CD4-positive, alpha-beta T cell (primary cell): ENCODE measurements at regions of chr3 and their contacts with region 1.

Region 1: DNA sequence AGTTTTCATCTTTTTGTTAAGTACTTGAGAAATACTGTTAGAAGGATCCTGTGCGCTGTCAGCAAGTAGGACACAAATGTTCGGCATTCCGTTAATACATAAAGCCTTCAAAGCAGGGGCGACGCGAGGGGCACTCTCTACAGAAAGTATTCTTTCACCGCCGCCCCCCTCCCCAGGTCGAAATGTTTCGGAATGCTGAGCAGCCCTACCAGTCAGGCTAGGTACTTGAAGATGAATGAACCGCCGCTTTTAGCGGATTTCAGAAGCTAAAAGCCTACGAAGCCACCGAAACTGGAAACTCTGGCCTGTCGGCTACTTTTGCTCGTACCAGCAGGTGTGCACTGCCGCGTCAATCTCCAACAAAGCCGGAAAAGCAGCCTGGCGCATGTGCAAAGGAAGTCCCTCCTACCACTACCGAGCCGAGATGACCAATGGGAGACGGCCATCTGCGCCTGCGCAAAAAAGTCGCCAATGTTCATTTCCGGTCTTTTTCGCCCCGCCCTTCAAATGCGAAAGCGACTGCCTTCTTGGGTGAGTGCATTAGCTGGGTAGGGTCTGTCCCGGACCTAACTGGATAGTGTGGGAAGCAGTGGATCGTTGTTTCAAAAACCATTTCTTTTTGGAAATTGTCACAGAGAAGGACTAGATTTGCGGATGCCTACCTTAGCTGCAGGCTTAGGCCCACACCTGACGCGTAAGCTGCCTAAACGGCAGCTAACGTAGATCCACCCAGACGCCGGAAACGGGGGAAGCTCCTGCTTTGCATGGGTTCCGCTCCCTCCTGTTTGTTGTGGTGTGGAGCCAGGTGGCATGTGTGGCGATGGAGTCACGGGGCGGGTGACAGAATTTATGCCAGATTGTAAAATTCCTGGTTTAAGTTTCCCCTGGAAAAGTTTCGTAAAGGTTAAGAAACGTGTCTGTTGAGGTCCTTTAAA is at the start of gene WDR5B:
- DNase-seq: peak; percentile 96 to 99 (median 98)
- ATAC-seq: peak; percentile 87
- H3K4me3 ChIP-seq: peak within 1 kb of the TSS; percentile 76
- H3K4me3 Mint-ChIP-seq: peak within 1 kb of the TSS; percentile 97
- H3K27ac ChIP-seq: peak within 1 kb of the TSS; percentile 90 to 91
- H3K27ac Mint-ChIP-seq: peak within 1 kb of the TSS; percentile 100
- H3K4me1 ChIP-seq: peaks cover 22% of the 10 kb centered on the region
- H3K4me1 Mint-ChIP-seq: peaks cover 59% of the 10 kb centered on the region
- H3K27me3 ChIP-seq: no peaks in the 10 kb centered on the region
- H3K27me3 Mint-ChIP-seq: no peaks in the 10 kb centered on the region
- CTCF ChIP-seq: no peak
- total RNA-seq, gene WDR5B: 2.3 to 2.4 TPM

Region 2: DNA sequence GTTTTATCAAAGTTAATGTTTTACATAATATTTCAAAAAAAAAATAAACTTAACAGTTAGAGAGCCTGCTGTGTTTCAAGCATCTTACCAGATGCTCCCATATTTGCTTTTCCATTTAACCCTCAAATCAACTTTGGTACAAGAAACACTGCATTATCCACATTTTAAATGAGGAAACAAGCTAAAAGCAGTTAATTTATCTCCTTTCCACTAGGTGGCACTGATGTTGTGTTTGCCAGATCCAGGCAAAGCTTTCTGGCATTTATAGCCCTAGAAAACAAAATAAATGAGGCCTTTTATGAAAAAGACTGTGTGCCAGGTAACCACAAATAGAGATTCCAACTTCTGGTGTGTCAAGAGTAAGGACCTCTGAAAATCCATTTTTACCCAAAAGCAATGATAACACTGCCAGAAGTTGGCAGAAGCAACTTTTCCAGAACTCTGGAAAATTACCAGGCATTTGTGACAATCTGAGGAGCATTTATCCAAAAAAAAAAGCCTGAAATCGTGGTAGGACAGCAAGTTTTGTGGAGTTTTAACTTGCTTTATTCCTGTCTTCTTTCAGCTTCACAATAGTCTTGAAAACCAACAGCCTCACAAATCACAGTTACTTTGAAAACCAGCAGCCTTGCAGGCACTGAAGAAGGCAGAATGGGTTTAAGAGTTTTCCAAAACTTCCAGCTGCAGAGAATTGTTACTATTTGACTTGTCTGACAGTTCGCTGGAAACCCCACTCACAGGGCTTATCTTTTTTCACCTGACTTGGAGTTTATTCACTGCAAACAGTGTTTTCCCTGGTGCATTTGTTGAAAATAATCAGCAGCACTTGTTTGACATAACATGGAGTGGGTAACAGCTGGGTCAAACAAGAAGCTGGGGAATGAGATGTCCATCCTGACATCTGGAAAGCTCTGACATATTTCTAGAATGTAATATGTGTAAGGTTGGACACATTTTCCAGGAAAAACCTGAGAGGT is 22.8 kb before region 1 on chr3:
- CTCF ChIA-PET with region 1: interaction called, 14 read pairs
- POLR2A ChIA-PET with region 1: interaction called, 17 read pairs
- intact Hi-C with region 1: no loop called
- DNase-seq: peak in 5 of 14 experiments; percentile 5 to 68 (median 64)
- ATAC-seq: peak; percentile 55
- H3K4me3 ChIP-seq: no peak overlapping the region
- H3K4me3 Mint-ChIP-seq: no peak overlapping the region
- H3K27ac ChIP-seq: no peak overlapping the region
- H3K27ac Mint-ChIP-seq: no peak overlapping the region
- H3K4me1 ChIP-seq: no peaks in the 10 kb centered on the region
- H3K4me1 Mint-ChIP-seq: peaks cover 10% of the 10 kb centered on the region
- H3K27me3 ChIP-seq: no peaks in the 10 kb centered on the region
- H3K27me3 Mint-ChIP-seq: no peaks in the 10 kb centered on the region
- CTCF ChIP-seq: peak; percentile 81

Region 3: DNA sequence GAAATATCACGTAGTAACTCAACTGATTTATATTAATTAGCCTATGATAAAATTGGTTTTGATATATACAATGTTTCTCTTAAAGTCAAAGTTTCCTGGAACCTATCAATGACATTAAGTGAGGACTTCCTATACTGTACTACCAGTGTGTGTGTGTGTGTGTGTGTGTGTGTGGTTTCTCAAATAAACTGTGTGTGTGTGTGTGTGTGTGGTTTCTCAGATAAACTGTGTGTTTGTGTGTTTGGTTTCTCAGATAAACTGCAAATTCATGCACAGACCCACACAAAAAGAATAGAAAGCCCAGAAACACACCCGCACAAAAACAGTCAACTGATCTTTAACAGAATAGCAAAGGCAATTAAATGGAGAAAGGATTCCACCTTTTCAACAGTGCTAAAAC is 14.4 kb after region 1 on chr3:
- CTCF ChIA-PET with region 1: no interaction called
- POLR2A ChIA-PET with region 1: interaction called, 19 read pairs
- intact Hi-C with region 1: no loop called
- DNase-seq: no peak
- ATAC-seq: no peak
- H3K4me3 ChIP-seq: no peak overlapping the region
- H3K4me3 Mint-ChIP-seq: no peak overlapping the region
- H3K27ac ChIP-seq: no peak overlapping the region
- H3K27ac Mint-ChIP-seq: no peak overlapping the region
- H3K4me1 ChIP-seq: no peaks in the 10 kb centered on the region
- H3K4me1 Mint-ChIP-seq: no peaks in the 10 kb centered on the region
- H3K27me3 ChIP-seq: no peaks in the 10 kb centered on the region
- H3K27me3 Mint-ChIP-seq: no peaks in the 10 kb centered on the region
- CTCF ChIP-seq: no peak

Region 4: GRCh38 chr3:122451371-122451770 is 35.4 kb after region 1 on chr3:
- CTCF ChIA-PET with region 1: no interaction called
- POLR2A ChIA-PET with region 1: no interaction called
- intact Hi-C with region 1: no loop called
- DNase-seq: no peak
- ATAC-seq: no peak
- H3K4me3 ChIP-seq: no peak overlapping the region
- H3K4me3 Mint-ChIP-seq: no peak overlapping the region
- H3K27ac ChIP-seq: no peak overlapping the region
- H3K27ac Mint-ChIP-seq: no peak overlapping the region
- H3K4me1 ChIP-seq: no peaks in the 10 kb centered on the region
- H3K4me1 Mint-ChIP-seq: peaks cover 5% of the 10 kb centered on the region
- H3K27me3 ChIP-seq: no peaks in the 10 kb centered on the region
- H3K27me3 Mint-ChIP-seq: no peaks in the 10 kb centered on the region
- CTCF ChIP-seq: no peak

Region 5: DNA sequence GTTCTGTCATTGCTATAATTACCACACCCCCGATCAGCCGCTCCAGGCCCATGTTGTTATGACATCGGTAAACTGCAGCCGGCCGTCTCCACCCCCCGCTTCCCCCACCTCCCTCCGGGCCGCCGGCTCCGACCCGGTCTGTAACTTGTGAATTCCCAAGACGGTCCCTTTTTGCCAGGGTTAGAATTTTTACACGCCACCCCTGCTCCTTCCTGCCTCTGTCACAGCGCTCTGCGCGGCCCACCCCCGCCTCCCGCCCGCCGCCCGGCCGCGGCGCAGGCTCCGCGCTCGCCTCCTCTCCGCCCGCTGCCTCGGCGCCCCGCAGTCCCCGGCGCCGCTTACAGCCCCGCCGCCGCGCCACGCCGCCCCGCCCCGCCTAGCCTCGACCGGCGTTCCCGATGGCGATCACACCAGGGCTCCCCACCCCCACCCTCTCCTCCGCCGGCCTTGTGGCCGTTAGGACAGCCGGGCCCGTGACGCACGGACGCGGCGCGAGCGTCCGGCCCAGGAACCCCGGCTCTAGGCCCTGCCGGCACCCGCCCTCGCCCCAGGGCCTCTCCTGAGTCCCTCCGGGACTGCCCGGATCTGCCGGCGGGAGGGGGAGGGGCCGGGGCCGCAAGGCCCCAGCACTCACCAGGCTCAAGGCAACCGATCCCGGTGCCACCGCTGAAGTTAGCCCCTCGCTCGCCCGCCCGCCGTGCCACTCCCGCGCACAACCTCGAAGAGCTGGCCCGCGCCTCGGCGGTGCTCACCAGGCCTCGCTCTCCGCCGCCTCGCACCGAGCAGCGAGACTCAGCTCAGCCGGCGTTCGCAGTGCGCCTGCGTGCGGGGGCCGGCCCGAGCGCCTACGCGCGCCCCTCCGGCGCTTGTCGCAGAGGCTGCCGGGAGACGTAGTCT is 98.4 kb after region 1 on chr3 and contains the start of gene KPNA1:
- CTCF ChIA-PET with region 1: interaction called, 6 read pairs
- POLR2A ChIA-PET with region 1: interaction called, 58 read pairs
- intact Hi-C with region 1: loop called (anchors 1 to 2 kb)
- DNase-seq: peak; percentile 70 to 95 (median 82)
- ATAC-seq: peak; percentile 85
- H3K4me3 ChIP-seq: peak within 1 kb of the TSS; percentile 68
- H3K4me3 Mint-ChIP-seq: peak within 1 kb of the TSS; percentile 89
- H3K27ac ChIP-seq: peak within 1 kb of the TSS; percentile 83 to 97
- H3K27ac Mint-ChIP-seq: peak within 1 kb of the TSS; percentile 82
- H3K4me1 ChIP-seq: peaks cover 17% of the 10 kb centered on the region
- H3K4me1 Mint-ChIP-seq: peaks cover 44% of the 10 kb centered on the region
- H3K27me3 ChIP-seq: no peaks in the 10 kb centered on the region
- H3K27me3 Mint-ChIP-seq: no peaks in the 10 kb centered on the region
- CTCF ChIP-seq: no peak
- total RNA-seq, gene KPNA1: 46.2 to 49.8 TPM

Region 6: GRCh38 chr3:122572940-122573412 is 157.0 kb after region 1 on chr3:
- CTCF ChIA-PET with region 1: no interaction called
- POLR2A ChIA-PET with region 1: interaction called, 12 read pairs
- intact Hi-C with region 1: no loop called
- DNase-seq: peak in 7 of 14 experiments; percentile 4 to 74 (median 43)
- ATAC-seq: no peak
- H3K4me3 ChIP-seq: no peak overlapping the region
- H3K4me3 Mint-ChIP-seq: peak overlapping the region; percentile 50
- H3K27ac ChIP-seq: peak overlapping the region in 1 of 2 donors; percentile 38
- H3K27ac Mint-ChIP-seq: peak overlapping the region; percentile 67
- H3K4me1 ChIP-seq: peaks cover 37% of the 10 kb centered on the region
- H3K4me1 Mint-ChIP-seq: peaks cover 65% of the 10 kb centered on the region
- H3K27me3 ChIP-seq: no peaks in the 10 kb centered on the region
- H3K27me3 Mint-ChIP-seq: no peaks in the 10 kb centered on the region
- CTCF ChIP-seq: no peak

Region 7: DNA sequence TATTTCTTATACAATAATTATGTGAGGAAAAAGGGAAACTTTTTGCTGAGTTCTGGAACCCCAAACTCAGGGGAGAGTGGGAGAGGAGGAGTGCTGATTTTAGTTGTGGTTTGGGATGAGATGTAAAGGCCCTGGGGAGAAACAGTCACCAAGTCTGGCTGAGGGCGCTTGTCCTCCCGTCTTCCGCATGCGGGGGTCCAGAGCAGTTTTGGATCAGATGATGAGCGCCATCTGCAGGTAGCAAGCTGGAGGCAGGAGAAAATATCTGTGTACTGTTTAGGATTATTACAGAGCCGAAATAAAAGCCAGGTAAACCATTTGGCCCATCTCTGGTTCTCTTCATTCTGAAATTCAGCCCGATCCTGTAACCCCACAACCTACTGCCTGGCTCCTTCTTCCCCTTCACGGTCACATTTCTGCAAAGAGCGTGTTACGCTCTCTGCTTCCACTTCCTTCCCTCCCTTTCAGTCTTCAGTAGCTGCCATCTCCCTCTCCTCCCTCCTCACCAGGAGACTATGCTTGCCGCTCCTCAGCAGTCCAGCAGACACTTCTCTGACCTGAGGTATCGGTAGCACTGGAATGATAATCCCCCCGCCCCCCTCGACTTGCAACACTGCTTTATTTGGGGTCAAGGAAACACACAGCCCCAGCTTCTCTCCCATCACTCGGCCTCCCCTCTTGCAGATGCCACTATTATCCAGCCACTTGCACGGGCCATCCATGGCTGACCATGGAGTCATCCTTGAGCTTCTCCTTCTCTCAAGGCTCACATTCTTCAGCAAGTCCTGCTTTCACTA is 263.3 kb after region 1 on chr3:
- CTCF ChIA-PET with region 1: interaction called, 8 read pairs
- POLR2A ChIA-PET with region 1: interaction called, 14 read pairs
- intact Hi-C with region 1: no loop called
- DNase-seq: peak; percentile 71 to 92 (median 78)
- ATAC-seq: peak; percentile 68
- H3K4me3 ChIP-seq: peak overlapping the region; percentile 93
- H3K4me3 Mint-ChIP-seq: peak overlapping the region; percentile 93
- H3K27ac ChIP-seq: peak overlapping the region; percentile 88 to 91
- H3K27ac Mint-ChIP-seq: peak overlapping the region; percentile 96
- H3K4me1 ChIP-seq: peaks cover 46% of the 10 kb centered on the region
- H3K4me1 Mint-ChIP-seq: peaks cover 54% of the 10 kb centered on the region
- H3K27me3 ChIP-seq: no peaks in the 10 kb centered on the region
- H3K27me3 Mint-ChIP-seq: no peaks in the 10 kb centered on the region
- CTCF ChIP-seq: peak; percentile 83

Region 8: GRCh38 chr3:122739172-122739571 is 323.2 kb after region 1 on chr3:
- CTCF ChIA-PET with region 1: no interaction called
- POLR2A ChIA-PET with region 1: no interaction called
- intact Hi-C with region 1: no loop called
- DNase-seq: no peak
- ATAC-seq: no peak
- H3K4me3 ChIP-seq: no peak overlapping the region
- H3K4me3 Mint-ChIP-seq: no peak overlapping the region
- H3K27ac ChIP-seq: no peak overlapping the region
- H3K27ac Mint-ChIP-seq: no peak overlapping the region
- H3K4me1 ChIP-seq: no peaks in the 10 kb centered on the region
- H3K4me1 Mint-ChIP-seq: no peaks in the 10 kb centered on the region
- H3K27me3 ChIP-seq: no peaks in the 10 kb centered on the region
- H3K27me3 Mint-ChIP-seq: no peaks in the 10 kb centered on the region
- CTCF ChIP-seq: no peak

Region 9: GRCh38 chr3:123201566-123202427 is 785.8 kb after region 1 on chr3 and contains the start of gene SEC22A:
- CTCF ChIA-PET with region 1: no interaction called
- POLR2A ChIA-PET with region 1: interaction called, 12 read pairs
- intact Hi-C with region 1: no loop called
- DNase-seq: peak; percentile 88 to 99 (median 94)
- ATAC-seq: peak; percentile 95
- H3K4me3 ChIP-seq: peak within 1 kb of the TSS; percentile 88
- H3K4me3 Mint-ChIP-seq: peak within 1 kb of the TSS; percentile 89
- H3K27ac ChIP-seq: peak within 1 kb of the TSS; percentile 96 to 98
- H3K27ac Mint-ChIP-seq: peak within 1 kb of the TSS; percentile 98
- H3K4me1 ChIP-seq: peaks cover 20% of the 10 kb centered on the region
- H3K4me1 Mint-ChIP-seq: peaks cover 44% of the 10 kb centered on the region
- H3K27me3 ChIP-seq: no peaks in the 10 kb centered on the region
- H3K27me3 Mint-ChIP-seq: no peaks in the 10 kb centered on the region
- CTCF ChIP-seq: no peak
- total RNA-seq, gene SEC22A: 7.9 to 11.5 TPM